Caco-2 (cell line): ENCODE measurements at regions of chr6 and their contacts with region 1.

Region 1: GRCh38 chr6:6724539-6725467 is 136.3 kb downstream of the LY86 start:
- DNase-seq: peak; percentile 75 to 76
- H3K4me3 ChIP-seq: peak overlapping the region; percentile 34
- H3K4me3 Mint-ChIP-seq: peak overlapping the region; percentile 74
- H3K27ac Mint-ChIP-seq: peak overlapping the region; percentile 85
- H3K4me1 ChIP-seq: peaks cover 22% of the 10 kb centered on the region
- H3K4me1 Mint-ChIP-seq: peaks cover 30% of the 10 kb centered on the region
- H3K27me3 ChIP-seq: no peaks in the 10 kb centered on the region
- H3K27me3 Mint-ChIP-seq: no peaks in the 10 kb centered on the region
- CTCF ChIP-seq: peak; percentile 55 to 80

Region 2: DNA sequence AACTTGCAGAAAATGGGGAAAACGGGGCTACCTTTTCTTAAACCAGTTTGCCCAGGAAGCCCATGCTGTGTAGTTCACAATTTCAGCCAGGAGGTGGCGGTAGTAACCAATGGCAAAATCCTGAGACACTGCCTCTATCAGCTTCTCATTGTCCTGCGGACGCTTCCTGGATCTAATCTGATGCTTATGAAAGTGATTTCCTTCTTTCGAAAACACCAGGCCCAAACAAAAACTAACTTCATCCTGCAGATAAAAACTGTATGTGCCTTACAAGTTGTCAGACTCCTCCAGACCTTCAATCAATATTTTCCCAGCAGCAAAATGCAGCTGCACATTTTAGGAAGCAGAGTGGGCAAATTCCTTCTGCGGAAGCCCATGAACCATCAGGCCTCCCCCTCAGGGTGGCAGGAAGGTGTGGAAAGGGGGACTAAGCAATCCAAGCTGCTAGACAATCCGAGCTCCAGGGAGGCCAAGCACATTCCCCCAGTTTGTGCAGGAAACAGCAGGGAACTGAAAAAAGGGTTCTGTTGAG is 47.8 kb before region 1 on chr6:
- CTCF ChIA-PET with region 1: interaction called, 6 read pairs
- POLR2A ChIA-PET with region 1: no interaction called
- intact Hi-C with region 1: loop called (anchors 2 kb)
- DNase-seq: peak; percentile 65 to 83
- H3K4me3 ChIP-seq: no peak overlapping the region
- H3K4me3 Mint-ChIP-seq: no peak overlapping the region
- H3K27ac Mint-ChIP-seq: no peak overlapping the region
- H3K4me1 ChIP-seq: peaks cover 3% of the 10 kb centered on the region
- H3K4me1 Mint-ChIP-seq: peaks cover 7% of the 10 kb centered on the region
- H3K27me3 ChIP-seq: no peaks in the 10 kb centered on the region
- H3K27me3 Mint-ChIP-seq: peaks cover 4% of the 10 kb centered on the region
- CTCF ChIP-seq: peak; percentile 86 to 92

Region 3: DNA sequence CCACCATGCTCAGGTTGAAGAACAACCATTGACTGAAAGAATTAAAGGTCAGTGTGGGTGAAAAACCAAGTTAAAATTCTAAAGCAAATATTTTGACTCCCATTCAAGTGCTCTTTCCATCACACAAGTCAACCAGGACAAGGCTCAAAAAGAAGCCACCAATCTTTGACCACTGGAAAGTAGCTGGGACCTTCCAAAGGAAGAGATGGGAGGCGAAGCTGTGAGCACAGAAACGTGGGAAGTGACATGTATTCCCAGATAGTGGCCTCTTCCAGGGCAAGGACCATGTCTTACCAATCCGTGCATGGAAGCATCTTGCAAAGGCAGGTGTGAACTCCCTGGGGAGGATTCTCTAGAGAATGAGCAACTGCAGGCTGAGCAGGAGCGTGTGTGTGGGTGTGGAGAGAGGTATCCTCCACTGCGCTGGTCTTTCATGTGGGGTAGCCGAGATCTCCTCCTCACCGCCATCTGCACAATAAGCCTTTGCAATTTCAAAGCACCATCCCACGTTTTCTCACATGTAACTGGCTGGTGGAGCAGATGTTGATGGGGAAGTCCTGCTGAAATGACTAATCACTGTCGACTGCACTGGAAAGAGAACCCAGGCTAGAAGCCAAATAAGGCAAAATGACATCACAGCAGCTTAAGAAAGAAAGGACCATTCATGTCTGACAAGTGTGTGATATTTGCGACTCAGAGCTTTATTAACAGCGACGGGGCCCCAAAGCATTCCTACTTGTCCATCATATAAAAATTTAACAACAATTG is 193.6 kb after region 1 on chr6:
- CTCF ChIA-PET with region 1: no interaction called
- POLR2A ChIA-PET with region 1: no interaction called
- intact Hi-C with region 1: loop called (anchors 10 kb)
- DNase-seq: no peak
- H3K4me3 ChIP-seq: no peak overlapping the region
- H3K4me3 Mint-ChIP-seq: no peak overlapping the region
- H3K27ac Mint-ChIP-seq: no peak overlapping the region
- H3K4me1 ChIP-seq: peaks cover under 1% of the 10 kb centered on the region; the same call in 1 of the 2 replicates
- H3K4me1 Mint-ChIP-seq: peaks cover 6% of the 10 kb centered on the region
- H3K27me3 ChIP-seq: no peaks in the 10 kb centered on the region
- H3K27me3 Mint-ChIP-seq: no peaks in the 10 kb centered on the region
- CTCF ChIP-seq: no peak

Region 4: GRCh38 chr6:7051233-7052114 is 326.7 kb after region 1 on chr6:
- CTCF ChIA-PET with region 1: no interaction called
- POLR2A ChIA-PET with region 1: no interaction called
- intact Hi-C with region 1: loop called (anchors 10 kb)
- DNase-seq: peak; percentile 74 to 75
- H3K4me3 ChIP-seq: peak overlapping the region; percentile 77
- H3K4me3 Mint-ChIP-seq: peak overlapping the region; percentile 73
- H3K27ac Mint-ChIP-seq: peak overlapping the region; percentile 55
- H3K4me1 ChIP-seq: peaks cover 3% of the 10 kb centered on the region; the same call in 1 of the 2 replicates
- H3K4me1 Mint-ChIP-seq: peaks cover 3% of the 10 kb centered on the region
- H3K27me3 ChIP-seq: no peaks in the 10 kb centered on the region
- H3K27me3 Mint-ChIP-seq: no peaks in the 10 kb centered on the region
- CTCF ChIP-seq: no peak

Region 5: DNA sequence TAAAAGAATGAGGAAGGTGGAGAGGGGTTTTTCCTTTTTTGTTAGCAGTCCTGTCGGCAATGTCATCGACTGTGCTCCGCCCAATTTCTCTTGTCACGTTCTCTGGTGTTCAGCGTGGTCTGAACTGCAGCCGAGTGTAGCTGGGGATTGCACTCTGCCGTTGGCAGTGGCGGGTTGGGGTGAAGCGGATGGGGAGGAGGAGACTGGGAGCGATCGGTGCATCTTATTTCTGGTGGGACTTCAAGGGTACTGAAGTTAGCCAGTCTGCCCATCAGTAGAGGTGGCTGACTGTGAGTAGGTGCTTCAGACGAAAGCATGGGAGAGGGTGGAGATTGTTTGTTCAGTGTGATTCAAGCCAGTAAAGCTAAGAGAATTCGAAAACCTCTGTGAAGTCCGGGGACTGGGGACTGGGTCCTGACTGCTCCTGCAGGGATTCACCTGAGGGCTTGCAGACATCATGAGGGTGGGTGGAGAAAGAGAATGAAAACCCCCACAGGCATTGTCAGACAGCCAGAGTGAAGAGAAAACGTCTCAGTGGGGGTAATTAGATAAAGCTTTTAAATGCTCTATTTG is 388.0 kb after region 1 on chr6:
- CTCF ChIA-PET with region 1: no interaction called
- POLR2A ChIA-PET with region 1: no interaction called
- intact Hi-C with region 1: loop called (anchors 10 kb)
- DNase-seq: peak in 1 of 2 experiments; percentile 30
- H3K4me3 ChIP-seq: peak overlapping the region; percentile 19
- H3K4me3 Mint-ChIP-seq: peak overlapping the region; percentile 68
- H3K27ac Mint-ChIP-seq: peak overlapping the region; percentile 36
- H3K4me1 ChIP-seq: peaks cover 27% of the 10 kb centered on the region
- H3K4me1 Mint-ChIP-seq: peaks cover 17% of the 10 kb centered on the region
- H3K27me3 ChIP-seq: no peaks in the 10 kb centered on the region
- H3K27me3 Mint-ChIP-seq: no peaks in the 10 kb centered on the region
- CTCF ChIP-seq: no peak

Region 6: GRCh38 chr6:7243179-7243981 is 518.6 kb after region 1 on chr6:
- CTCF ChIA-PET with region 1: interaction called, 4 read pairs
- POLR2A ChIA-PET with region 1: no interaction called
- intact Hi-C with region 1: loop called (anchors 1 kb)
- DNase-seq: peak; percentile 56 to 76
- H3K4me3 ChIP-seq: no peak overlapping the region
- H3K4me3 Mint-ChIP-seq: no peak overlapping the region
- H3K27ac Mint-ChIP-seq: no peak overlapping the region
- H3K4me1 ChIP-seq: peaks cover 27% of the 10 kb centered on the region
- H3K4me1 Mint-ChIP-seq: peaks cover 39% of the 10 kb centered on the region
- H3K27me3 ChIP-seq: no peaks in the 10 kb centered on the region
- H3K27me3 Mint-ChIP-seq: no peaks in the 10 kb centered on the region
- CTCF ChIP-seq: peak; percentile 83 to 87

Region 7: GRCh38 chr6:7261032-7261841 is 536.4 kb after region 1 on chr6:
- CTCF ChIA-PET with region 1: no interaction called
- POLR2A ChIA-PET with region 1: no interaction called
- intact Hi-C with region 1: loop called (anchors 5 kb)
- DNase-seq: peak; percentile 92
- H3K4me3 ChIP-seq: peak overlapping the region; percentile 49
- H3K4me3 Mint-ChIP-seq: peak overlapping the region; percentile 86
- H3K27ac Mint-ChIP-seq: peak overlapping the region; percentile 81
- H3K4me1 ChIP-seq: peaks cover 13% of the 10 kb centered on the region
- H3K4me1 Mint-ChIP-seq: peaks cover 17% of the 10 kb centered on the region
- H3K27me3 ChIP-seq: no peaks in the 10 kb centered on the region
- H3K27me3 Mint-ChIP-seq: no peaks in the 10 kb centered on the region
- CTCF ChIP-seq: no peak